ENCODE measurements at regions of chr17 and their contacts with region 1.

Region 1: DNA sequence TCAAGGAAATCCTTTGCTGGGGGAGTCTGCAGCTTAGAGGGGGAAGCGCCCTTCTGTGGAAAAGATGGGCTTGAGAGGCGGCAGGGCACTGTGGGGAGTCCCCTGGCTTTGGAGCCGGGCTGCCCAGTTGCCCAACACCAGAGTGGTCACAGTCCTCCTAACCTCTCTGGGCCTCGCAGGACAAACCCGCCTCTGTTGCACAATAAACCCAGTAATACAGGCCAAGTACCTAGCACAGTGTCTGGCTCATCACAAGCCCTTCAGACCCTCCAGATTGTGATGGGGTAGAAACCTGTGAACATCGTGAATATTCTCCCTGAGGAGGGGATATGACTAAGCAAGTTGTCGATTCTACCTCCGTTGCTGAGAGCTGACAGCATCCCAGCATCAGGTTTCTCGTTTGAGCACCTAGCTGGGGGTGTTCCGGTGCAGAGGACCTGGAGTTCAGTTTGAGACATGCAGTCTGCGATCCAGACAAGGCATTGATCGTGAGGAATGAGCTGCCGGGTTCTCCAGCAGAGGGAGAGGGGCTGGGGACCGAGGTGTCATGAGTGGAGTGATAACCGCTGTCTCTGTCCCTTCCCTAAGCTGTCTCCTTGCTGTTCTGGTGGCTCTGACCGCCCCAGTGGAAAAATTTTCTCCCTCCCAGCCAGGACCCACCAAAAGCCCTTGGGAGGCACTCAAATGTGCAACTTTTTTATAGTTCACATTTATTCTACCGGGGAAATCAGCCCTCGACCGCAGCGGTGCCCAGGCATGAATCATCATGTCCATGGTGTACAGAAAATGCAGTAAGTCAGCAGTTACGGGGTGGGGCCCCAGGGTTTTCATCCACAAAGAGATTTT is 161.9 kb downstream of the WSCD1 start:
- DNase-seq: no peak
- ATAC-seq: no peak
- H3K4me3 ChIP-seq: no peak overlapping the region
- H3K27ac ChIP-seq: no peak overlapping the region
- H3K4me1 ChIP-seq: no peaks in the 10 kb centered on the region
- H3K27me3 ChIP-seq: no peaks in the 10 kb centered on the region
- CTCF ChIP-seq: no peak
- POLR2A ChIP-seq: no peak
- RAD21 ChIP-seq: no peak

Region 2: DNA sequence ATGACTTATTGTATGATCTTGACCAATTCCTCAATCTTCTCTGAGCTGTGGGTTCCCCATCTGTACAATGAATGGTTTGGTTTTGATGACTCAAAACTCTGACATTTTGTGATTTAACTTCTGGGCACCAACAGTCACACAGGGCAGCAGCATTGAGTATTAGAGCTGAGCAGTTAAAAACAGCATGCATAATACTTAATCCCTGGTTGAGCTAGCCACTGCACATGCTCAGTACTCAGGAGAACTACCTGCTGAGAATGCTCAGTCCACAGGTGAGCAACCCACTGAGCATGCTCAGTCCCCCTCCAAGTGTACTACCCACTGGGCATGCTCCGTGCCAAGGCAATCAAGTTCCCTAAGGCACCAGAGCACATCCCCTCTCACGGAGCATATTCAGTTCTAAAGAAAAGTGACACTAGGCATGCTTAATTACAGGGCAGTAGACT is 134.1 kb after region 1 on chr17:
- CTCF ChIA-PET with region 1: no interaction called
- POLR2A ChIA-PET with region 1: no interaction called
- dilution Hi-C with region 1: no loop called
- in situ Hi-C with region 1: no loop called
- intact Hi-C with region 1: loop called (anchors 10 kb)
- DNase-seq: peak; percentile 24
- ATAC-seq: peak; percentile 53
- H3K4me3 ChIP-seq: no peak overlapping the region
- H3K27ac ChIP-seq: no peak overlapping the region
- H3K4me1 ChIP-seq: peaks cover 21% of the 10 kb centered on the region
- H3K27me3 ChIP-seq: peaks cover 5% of the 10 kb centered on the region
- CTCF ChIP-seq: no peak
- POLR2A ChIP-seq: no peak
- RAD21 ChIP-seq: no peak

Region 3: GRCh38 chr17:6716736-6717135 is 484.6 kb after region 1 on chr17:
- CTCF ChIA-PET with region 1: no interaction called
- POLR2A ChIA-PET with region 1: no interaction called
- dilution Hi-C with region 1: no loop called
- in situ Hi-C with region 1: no loop called
- intact Hi-C with region 1: no loop called
- DNase-seq: no peak
- ATAC-seq: no peak
- H3K4me3 ChIP-seq: no peak overlapping the region
- H3K27ac ChIP-seq: no peak overlapping the region
- H3K4me1 ChIP-seq: no peaks in the 10 kb centered on the region
- H3K27me3 ChIP-seq: peaks cover 25% of the 10 kb centered on the region
- CTCF ChIP-seq: no peak
- POLR2A ChIP-seq: no peak
- RAD21 ChIP-seq: no peak

Measured in IMR-90 (cell line).